Naive thymus-derived CD4-positive, alpha-beta T cell (primary cell): ENCODE measurements at regions of chr15 and their contacts with region 1.

Region 1: GRCh38 chr15:90902040-90902839 is 862 bp upstream of the MAN2A2 start:
- DNase-seq: peak; percentile 60 to 81 (median 73)
- ATAC-seq: peak; percentile 84
- H3K4me3 ChIP-seq: peak overlapping the region; percentile 82
- H3K4me3 Mint-ChIP-seq: peak overlapping the region; percentile 85 to 96 (median 90)
- H3K27ac ChIP-seq: peak overlapping the region; percentile 72
- H3K27ac Mint-ChIP-seq: peak overlapping the region; percentile 81 to 95 (median 90)
- H3K4me1 ChIP-seq: peaks cover 12 to 17% of the 10 kb centered on the region in 2 donors
- H3K4me1 Mint-ChIP-seq: peaks cover 11 to 37% (median 34%) of the 10 kb centered on the region in 7 donors
- H3K27me3 ChIP-seq: no peaks in the 10 kb centered on the region
- H3K27me3 Mint-ChIP-seq: no peaks in the 10 kb centered on the region

Region 2: DNA sequence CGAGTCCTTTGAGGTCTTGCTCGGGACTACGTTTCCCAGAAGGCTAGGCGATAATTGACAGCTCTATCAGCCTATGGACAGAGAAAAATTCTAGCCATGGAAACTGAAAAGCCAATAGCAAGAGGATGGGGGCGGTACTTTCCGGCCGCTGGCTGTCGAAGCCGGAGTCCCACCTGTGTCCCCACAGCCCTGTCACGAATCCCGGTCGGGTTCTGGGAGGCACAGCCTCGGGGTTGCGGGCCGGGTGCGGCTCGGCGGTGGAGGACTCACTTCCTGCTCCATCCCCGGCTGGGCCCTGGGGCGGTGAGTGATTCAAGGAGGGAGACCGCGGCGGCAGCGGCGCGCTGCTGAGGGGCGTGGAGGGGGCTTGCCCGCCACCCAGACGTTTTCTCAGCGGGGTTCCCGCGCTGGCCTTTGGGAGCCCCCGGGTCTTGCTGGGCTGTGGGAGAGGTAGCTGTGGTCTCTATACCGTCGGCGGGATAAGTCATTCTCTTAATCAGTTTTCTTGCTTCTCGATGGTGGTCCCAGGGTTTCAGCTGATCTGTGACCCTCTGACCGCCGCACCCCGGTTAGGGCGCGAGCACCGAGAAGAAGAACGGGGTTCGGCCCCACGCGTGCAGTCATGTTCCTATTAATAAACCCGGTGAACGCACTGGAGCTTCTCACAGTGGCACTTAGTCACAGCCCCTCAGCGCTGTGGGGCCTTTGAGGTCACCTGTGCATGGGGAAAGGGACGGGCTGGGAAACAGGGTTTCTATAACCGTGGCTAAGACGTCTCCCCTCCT is 549.9 kb before region 1 on chr15 and contains the start of gene ZNF774:
- CTCF ChIA-PET with region 1: no interaction called
- POLR2A ChIA-PET with region 1: no interaction called
- intact Hi-C with region 1: loop called in 1 of 2 experiments (anchors 5 kb)
- DNase-seq: peak; percentile 74 to 95 (median 93)
- ATAC-seq: peak; percentile 99
- H3K4me3 ChIP-seq: peak within 1 kb of the TSS; percentile 91
- H3K4me3 Mint-ChIP-seq: peak within 1 kb of the TSS; percentile 86 to 92 (median 89)
- H3K27ac ChIP-seq: peak within 1 kb of the TSS; percentile 73
- H3K27ac Mint-ChIP-seq: peak within 1 kb of the TSS in 8 of 9 donors; percentile 8 to 86 (median 66)
- H3K4me1 ChIP-seq: peaks cover 5 to 11% of the 10 kb centered on the region in 2 donors
- H3K4me1 Mint-ChIP-seq: peaks cover 7 to 29% (median 9%) of the 10 kb centered on the region in 7 donors
- H3K27me3 ChIP-seq: no peaks in the 10 kb centered on the region
- H3K27me3 Mint-ChIP-seq: peaks cover 0 to 17% (median 0%) of the 10 kb centered on the region in 5 donors
- total RNA-seq, gene ZNF774: 0.22 to 2.0 (median 1.5) TPM

Region 3: DNA sequence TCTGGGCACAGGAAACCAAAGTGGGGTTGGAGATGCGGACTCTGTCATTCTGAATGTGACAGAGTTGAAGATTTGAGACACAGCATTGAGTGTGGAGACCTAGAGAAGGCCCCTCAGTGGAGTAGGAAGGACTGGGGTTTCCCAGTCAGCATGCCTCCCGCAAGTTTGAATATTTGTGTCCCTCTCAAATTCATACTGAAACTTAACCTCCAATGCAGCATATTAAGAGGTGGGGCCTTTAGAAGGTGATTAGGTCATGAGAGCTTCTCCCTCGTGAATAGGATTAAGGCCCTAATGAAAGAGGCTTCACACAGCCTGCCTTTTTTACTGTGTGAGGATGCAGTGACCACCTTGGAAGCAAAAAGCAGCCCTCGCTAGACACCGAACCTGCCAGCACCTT is 22.1 kb after region 1 on chr15:
- CTCF ChIA-PET with region 1: interaction called, 150 read pairs
- POLR2A ChIA-PET with region 1: interaction called, 213 read pairs
- intact Hi-C with region 1: loop called in 1 of 2 experiments (anchors 2 kb)
- DNase-seq: no peak
- ATAC-seq: no peak
- H3K4me3 ChIP-seq: no peak overlapping the region
- H3K4me3 Mint-ChIP-seq: no peak overlapping the region
- H3K27ac ChIP-seq: no peak overlapping the region
- H3K27ac Mint-ChIP-seq: peak overlapping the region in 1 of 9 donors; percentile 63
- H3K4me1 ChIP-seq: peaks cover 0 to 4% of the 10 kb centered on the region in 2 donors
- H3K4me1 Mint-ChIP-seq: peaks cover 2 to 36% (median 3%) of the 10 kb centered on the region in 7 donors
- H3K27me3 ChIP-seq: no peaks in the 10 kb centered on the region
- H3K27me3 Mint-ChIP-seq: no peaks in the 10 kb centered on the region

Region 4: DNA sequence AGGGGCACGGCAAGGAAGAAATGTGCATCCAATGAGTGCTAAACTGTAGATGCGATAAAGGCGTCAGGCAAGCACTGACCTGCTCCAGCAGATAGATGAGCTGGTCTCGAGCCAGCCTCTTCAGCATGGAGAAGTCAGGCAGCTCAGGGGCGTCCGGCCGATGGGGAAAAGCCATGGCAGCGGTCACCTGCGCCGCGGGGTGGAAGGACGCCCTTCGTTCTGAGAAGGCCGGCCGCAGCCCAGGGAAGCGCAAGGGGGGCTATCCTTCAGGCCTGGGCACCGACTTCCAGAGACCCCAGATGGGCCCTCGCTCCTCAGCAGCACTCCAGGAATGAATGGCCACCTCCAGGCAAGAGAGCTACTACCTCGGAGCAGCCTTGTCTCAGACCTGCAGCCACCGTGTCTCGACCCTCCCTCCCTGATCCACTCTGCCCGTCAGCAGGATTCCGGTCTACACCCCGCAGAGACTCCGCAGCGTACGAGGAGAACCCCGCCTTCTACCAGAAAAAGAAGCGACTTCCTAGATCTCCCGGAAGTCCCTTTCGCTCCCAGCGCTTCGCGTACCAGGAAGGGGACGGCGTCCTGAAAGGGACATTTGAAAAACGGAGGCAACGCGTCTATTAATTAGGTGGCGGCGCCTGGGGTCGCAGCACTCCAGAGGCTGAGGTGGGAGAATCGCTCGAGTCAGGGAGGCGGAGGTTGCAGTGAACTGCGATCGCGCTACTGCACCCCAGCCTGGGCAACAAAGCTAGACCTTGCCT is 120.0 kb after region 1 on chr15 and contains the start of gene VPS33B:
- CTCF ChIA-PET with region 1: no interaction called
- POLR2A ChIA-PET with region 1: no interaction called
- intact Hi-C with region 1: loop called in 1 of 2 experiments (anchors 5 kb)
- DNase-seq: peak; percentile 37 to 78 (median 76)
- ATAC-seq: peak; percentile 91
- H3K4me3 ChIP-seq: peak within 1 kb of the TSS; percentile 100
- H3K4me3 Mint-ChIP-seq: peak within 1 kb of the TSS; percentile 87 to 99 (median 96)
- H3K27ac ChIP-seq: peak within 1 kb of the TSS; percentile 82
- H3K27ac Mint-ChIP-seq: peak within 1 kb of the TSS; percentile 79 to 96 (median 94)
- H3K4me1 ChIP-seq: peaks cover 5 to 15% of the 10 kb centered on the region in 2 donors
- H3K4me1 Mint-ChIP-seq: peaks cover 38 to 56% (median 47%) of the 10 kb centered on the region in 7 donors
- H3K27me3 ChIP-seq: no peaks in the 10 kb centered on the region
- H3K27me3 Mint-ChIP-seq: no peaks in the 10 kb centered on the region
- total RNA-seq, gene VPS33B: 15.8 to 28.1 (median 25.7) TPM

Region 5: GRCh38 chr15:91049378-91050127 is 147.3 kb after region 1 on chr15:
- CTCF ChIA-PET with region 1: interaction called, 7 read pairs
- POLR2A ChIA-PET with region 1: no interaction called
- intact Hi-C with region 1: loop called in 1 of 2 experiments (anchors 1 kb)
- DNase-seq: peak; percentile 19 to 62 (median 54)
- ATAC-seq: peak; percentile 92
- H3K4me3 ChIP-seq: no peak overlapping the region
- H3K4me3 Mint-ChIP-seq: peak overlapping the region in 3 of 10 donors; percentile 12 to 48 (median 17)
- H3K27ac ChIP-seq: no peak overlapping the region
- H3K27ac Mint-ChIP-seq: peak overlapping the region in 4 of 9 donors; percentile 17 to 70 (median 20)
- H3K4me1 ChIP-seq: peaks cover 3 to 6% of the 10 kb centered on the region in 2 donors
- H3K4me1 Mint-ChIP-seq: peaks cover 6 to 40% (median 31%) of the 10 kb centered on the region in 7 donors
- H3K27me3 ChIP-seq: no peaks in the 10 kb centered on the region
- H3K27me3 Mint-ChIP-seq: peaks cover 10 to 41% (median 19%) of the 10 kb centered on the region in 5 donors